Naive thymus-derived CD4-positive, alpha-beta T cell (primary cell): ENCODE measurements at regions of chr11 and their contacts with region 1.

Region 1: DNA sequence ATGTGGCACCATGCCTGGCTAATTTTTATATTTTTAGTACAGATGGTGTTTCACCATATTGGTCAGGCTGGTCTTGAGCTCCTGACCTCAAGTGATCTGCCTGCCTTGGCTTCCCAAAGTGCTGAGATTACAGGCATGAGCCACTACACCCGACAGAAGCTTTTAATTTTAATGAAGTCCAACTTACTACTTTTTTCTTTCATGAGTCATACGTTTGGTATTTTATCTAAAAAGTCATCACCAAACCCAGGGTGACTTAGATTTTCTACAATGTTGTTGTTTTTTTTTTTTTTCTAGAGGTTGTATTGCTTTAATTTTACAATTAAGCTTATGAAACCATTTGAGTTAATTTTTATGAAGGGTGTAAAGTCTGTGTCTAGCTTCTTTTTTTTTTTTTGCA is 34.9 kb downstream of the JRKL start:
- DNase-seq: no peak
- ATAC-seq: no peak
- H3K4me3 ChIP-seq: no peak overlapping the region
- H3K4me3 Mint-ChIP-seq: no peak overlapping the region
- H3K27ac ChIP-seq: no peak overlapping the region
- H3K27ac Mint-ChIP-seq: no peak overlapping the region
- H3K4me1 ChIP-seq: no peaks in the 10 kb centered on the region
- H3K4me1 Mint-ChIP-seq: peaks cover 0 to 6% (median 0%) of the 10 kb centered on the region in 7 donors
- H3K27me3 ChIP-seq: peaks cover 0 to 3% of the 10 kb centered on the region in 2 donors
- H3K27me3 Mint-ChIP-seq: peaks cover 27 to 49% (median 44%) of the 10 kb centered on the region in 5 donors

Region 2: GRCh38 chr11:95764267-95764898 is 660.3 kb before region 1 on chr11:
- CTCF ChIA-PET with region 1: no interaction called
- POLR2A ChIA-PET with region 1: no interaction called
- intact Hi-C with region 1: loop called in 1 of 2 experiments (anchors 5 kb)
- DNase-seq: peak in 7 of 9 donors; percentile 43 to 73 (median 68)
- ATAC-seq: peak; percentile 95
- H3K4me3 ChIP-seq: no peak overlapping the region
- H3K4me3 Mint-ChIP-seq: no peak overlapping the region
- H3K27ac ChIP-seq: no peak overlapping the region
- H3K27ac Mint-ChIP-seq: no peak overlapping the region
- H3K4me1 ChIP-seq: no peaks in the 10 kb centered on the region
- H3K4me1 Mint-ChIP-seq: peaks cover 0 to 9% (median 0%) of the 10 kb centered on the region in 7 donors
- H3K27me3 ChIP-seq: no peaks in the 10 kb centered on the region
- H3K27me3 Mint-ChIP-seq: peaks cover 0 to 19% (median 0%) of the 10 kb centered on the region in 5 donors

Region 3: DNA sequence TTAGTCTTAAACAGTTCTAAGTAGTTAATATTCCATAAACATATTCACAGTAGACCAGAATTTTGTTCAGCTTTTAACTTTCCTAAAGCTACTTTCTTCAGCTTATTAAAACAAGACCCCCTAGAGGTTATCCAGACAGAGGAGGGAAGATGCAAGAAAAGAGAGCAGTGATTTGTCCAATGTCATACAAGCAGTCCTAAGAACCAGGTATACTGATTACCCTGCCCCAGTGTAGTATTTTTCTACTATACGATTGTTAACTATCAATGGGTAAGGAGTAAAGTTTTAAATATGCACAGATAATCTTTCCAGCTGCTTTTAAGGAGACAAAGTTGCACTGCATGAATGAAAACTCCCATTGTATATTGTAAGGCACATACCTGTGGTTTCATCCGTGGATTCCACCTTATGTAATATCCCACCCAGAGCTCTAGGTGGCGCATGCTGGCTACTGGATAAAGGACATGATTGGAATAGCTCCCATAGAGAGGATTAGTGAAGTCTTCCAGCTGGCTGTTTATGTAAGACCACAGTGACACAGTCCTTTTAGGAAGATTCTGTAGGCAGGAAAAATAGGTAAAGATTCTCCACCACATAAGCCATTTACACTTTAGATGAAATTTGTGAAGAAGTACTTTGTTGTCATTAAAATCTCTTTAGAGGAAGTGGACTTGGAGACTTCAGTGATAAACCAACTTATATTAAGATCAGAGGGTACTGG is 588.8 kb before region 1 on chr11:
- CTCF ChIA-PET with region 1: interaction called, 29 read pairs
- POLR2A ChIA-PET with region 1: no interaction called
- intact Hi-C with region 1: loop called (anchors 1 kb)
- DNase-seq: peak; percentile 17 to 67 (median 49)
- ATAC-seq: peak; percentile 96
- H3K4me3 ChIP-seq: no peak overlapping the region
- H3K4me3 Mint-ChIP-seq: no peak overlapping the region
- H3K27ac ChIP-seq: no peak overlapping the region
- H3K27ac Mint-ChIP-seq: peak overlapping the region in 4 of 9 donors; percentile 17 to 65 (median 28)
- H3K4me1 ChIP-seq: no peaks in the 10 kb centered on the region
- H3K4me1 Mint-ChIP-seq: peaks cover 0 to 5% (median 0%) of the 10 kb centered on the region in 7 donors
- H3K27me3 ChIP-seq: no peaks in the 10 kb centered on the region
- H3K27me3 Mint-ChIP-seq: no peaks in the 10 kb centered on the region

Region 4: DNA sequence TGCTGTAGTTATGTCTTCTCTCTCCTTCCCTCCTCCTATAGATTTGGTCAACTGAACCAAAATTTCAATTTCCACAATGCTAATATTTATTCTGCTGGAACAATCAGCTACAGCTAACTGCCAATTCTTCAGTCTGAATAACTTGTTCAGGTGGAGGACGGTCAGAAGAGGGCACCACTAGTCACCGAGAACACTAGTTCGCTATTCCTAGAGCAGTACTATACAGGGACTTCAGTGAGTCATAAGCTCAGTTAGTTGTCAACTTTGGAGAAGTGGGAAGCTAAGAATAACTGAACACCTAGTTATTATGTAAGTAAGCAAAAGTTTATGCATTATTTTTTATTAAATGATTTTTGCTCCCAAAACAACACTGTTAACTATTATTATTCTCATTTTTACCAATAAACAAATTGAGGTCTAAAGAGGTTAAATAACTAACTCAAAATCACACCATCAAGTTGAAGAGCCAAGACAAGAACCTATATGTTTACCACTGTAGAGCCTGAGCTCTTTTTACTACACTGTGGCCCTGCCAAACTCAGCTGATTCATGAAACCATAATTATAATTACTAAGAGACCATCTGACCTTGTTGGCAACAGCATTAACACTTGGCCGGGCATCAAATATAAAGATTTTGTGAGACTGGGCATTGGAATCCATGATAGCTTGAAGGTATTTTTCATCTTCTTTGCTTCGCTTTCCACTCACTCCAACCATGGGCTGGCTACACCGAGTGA is 575.4 kb before region 1 on chr11:
- CTCF ChIA-PET with region 1: interaction called, 6 read pairs
- POLR2A ChIA-PET with region 1: no interaction called
- intact Hi-C with region 1: loop called (anchors 1 kb)
- DNase-seq: peak in 6 of 9 donors; percentile 2 to 39 (median 19)
- ATAC-seq: peak; percentile 64
- H3K4me3 ChIP-seq: no peak overlapping the region
- H3K4me3 Mint-ChIP-seq: no peak overlapping the region
- H3K27ac ChIP-seq: no peak overlapping the region
- H3K27ac Mint-ChIP-seq: peak overlapping the region in 2 of 9 donors; percentile 11 to 49
- H3K4me1 ChIP-seq: no peaks in the 10 kb centered on the region
- H3K4me1 Mint-ChIP-seq: no peaks in the 10 kb centered on the region
- H3K27me3 ChIP-seq: no peaks in the 10 kb centered on the region
- H3K27me3 Mint-ChIP-seq: no peaks in the 10 kb centered on the region

Region 5: GRCh38 chr11:96054870-96055705 is 369.6 kb before region 1 on chr11:
- CTCF ChIA-PET with region 1: no interaction called
- POLR2A ChIA-PET with region 1: no interaction called
- intact Hi-C with region 1: loop called in 1 of 2 experiments (anchors 1 kb)
- DNase-seq: peak in 5 of 9 donors; percentile 15 to 41 (median 29)
- ATAC-seq: peak; percentile 72
- H3K4me3 ChIP-seq: no peak overlapping the region
- H3K4me3 Mint-ChIP-seq: peak overlapping the region in 4 of 10 donors; percentile 4 to 63 (median 32)
- H3K27ac ChIP-seq: no peak overlapping the region
- H3K27ac Mint-ChIP-seq: peak overlapping the region in 8 of 9 donors; percentile 15 to 88 (median 70)
- H3K4me1 ChIP-seq: peaks cover 0 to 16% of the 10 kb centered on the region in 2 donors
- H3K4me1 Mint-ChIP-seq: peaks cover 18 to 89% (median 77%) of the 10 kb centered on the region in 7 donors
- H3K27me3 ChIP-seq: no peaks in the 10 kb centered on the region
- H3K27me3 Mint-ChIP-seq: no peaks in the 10 kb centered on the region